Activated B cell treated with CpG ODN at 0.5 μM for 24 hours (primary cell): ENCODE measurements at regions of chr17 and their contacts with region 1.

Region 1: GRCh38 chr17:5078106-5079028 is at the start of gene ZFP3:
- DNase-seq: peak; percentile 80
- ATAC-seq: peak; percentile 88
- H3K4me3 Mint-ChIP-seq: peak within 1 kb of the TSS; percentile 83
- H3K27ac Mint-ChIP-seq: peak within 1 kb of the TSS; percentile 96
- H3K4me1 Mint-ChIP-seq: peaks cover 31% of the 10 kb centered on the region
- H3K27me3 Mint-ChIP-seq: no peaks in the 10 kb centered on the region
- CTCF ChIP-seq: no peak
- total RNA-seq, gene ZFP3: 10.1 and 11.5 TPM in 2 replicates

Region 2: DNA sequence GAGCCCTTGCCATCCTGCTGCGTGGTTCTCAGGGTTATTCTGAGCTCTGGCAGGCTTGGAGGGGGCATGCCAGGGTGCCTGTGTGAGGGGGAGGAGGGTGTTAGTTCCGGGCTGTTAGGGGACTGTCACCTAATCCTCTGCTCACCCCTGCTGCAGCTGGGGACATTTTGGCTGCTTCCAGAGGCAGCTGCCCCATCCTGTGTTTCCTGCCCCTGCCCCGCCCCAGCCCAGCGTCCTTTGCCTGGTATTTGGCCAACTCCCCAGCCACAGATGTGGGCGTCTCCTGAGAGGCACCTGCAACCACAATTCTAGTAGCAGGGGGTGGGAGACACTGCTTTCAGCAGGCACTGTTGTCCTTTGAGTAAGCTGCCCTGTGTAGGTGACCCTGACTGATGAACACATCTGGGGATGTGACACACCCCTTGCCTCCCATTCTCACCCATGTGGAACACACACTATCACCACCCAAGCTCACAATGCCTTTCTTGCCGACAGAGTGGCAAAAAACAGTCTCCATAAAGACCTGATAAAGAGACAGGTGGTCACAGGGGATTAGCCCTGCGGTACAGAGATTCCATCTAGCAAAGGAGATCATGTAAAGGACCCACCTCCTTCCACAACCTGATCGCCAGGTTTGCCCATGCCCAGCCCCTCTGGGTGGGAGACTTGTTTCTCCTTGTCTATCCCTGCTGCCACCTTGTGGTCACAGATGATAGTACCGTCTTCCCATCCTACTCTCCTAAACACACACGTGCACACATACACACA is 175.1 kb before region 1 on chr17 and contains the start of gene CHRNE:
- CTCF ChIA-PET with region 1: no interaction called
- POLR2A ChIA-PET with region 1: no interaction called
- intact Hi-C with region 1: loop called (anchors 5 kb)
- DNase-seq: peak; percentile 49
- ATAC-seq: peak; percentile 41
- H3K4me3 Mint-ChIP-seq: peak within 1 kb of the TSS; percentile 49
- H3K27ac Mint-ChIP-seq: peak within 1 kb of the TSS; percentile 73
- H3K4me1 Mint-ChIP-seq: peaks cover 44% of the 10 kb centered on the region
- H3K27me3 Mint-ChIP-seq: peaks cover 2% of the 10 kb centered on the region
- CTCF ChIP-seq: no peak
- total RNA-seq, gene CHRNE: 0.38 and 0.66 TPM in 2 replicates

Region 3: GRCh38 chr17:4997302-4998026 is 80.9 kb before region 1 on chr17 and contains the starts of genes INCA1 and KIF1C:
- CTCF ChIA-PET with region 1: interaction called, 3 read pairs
- POLR2A ChIA-PET with region 1: interaction called, 11 read pairs
- intact Hi-C with region 1: no loop called
- DNase-seq: peak; percentile 95
- ATAC-seq: peak; percentile 95
- H3K4me3 Mint-ChIP-seq: peak within 1 kb of the TSS; percentile 85
- H3K27ac Mint-ChIP-seq: peak within 1 kb of the TSS; percentile 90
- H3K4me1 Mint-ChIP-seq: peaks cover 20% of the 10 kb centered on the region
- H3K27me3 Mint-ChIP-seq: no peaks in the 10 kb centered on the region
- CTCF ChIP-seq: no peak
- total RNA-seq, gene INCA1: 0.17 and 0.44 TPM in 2 replicates
- total RNA-seq, gene KIF1C: 62.6 and 63.8 TPM in 2 replicates

Region 4: GRCh38 chr17:5097101-5097834 is 18.9 kb after region 1 on chr17:
- CTCF ChIA-PET with region 1: interaction called, 6 read pairs
- POLR2A ChIA-PET with region 1: interaction called, 18 read pairs
- intact Hi-C with region 1: loop called (anchors 1 kb)
- DNase-seq: peak; percentile 60
- ATAC-seq: peak; percentile 93
- H3K4me3 Mint-ChIP-seq: peak overlapping the region; percentile 94
- H3K27ac Mint-ChIP-seq: peak overlapping the region; percentile 91
- H3K4me1 Mint-ChIP-seq: peaks cover 12% of the 10 kb centered on the region
- H3K27me3 Mint-ChIP-seq: no peaks in the 10 kb centered on the region
- CTCF ChIP-seq: no peak

Region 5: GRCh38 chr17:5111402-5112204 is 33.2 kb after region 1 on chr17 and contains the start of gene ZNF232:
- CTCF ChIA-PET with region 1: no interaction called
- POLR2A ChIA-PET with region 1: interaction called, 16 read pairs
- intact Hi-C with region 1: loop called (anchors 1 kb)
- DNase-seq: peak; percentile 91
- ATAC-seq: peak; percentile 90
- H3K4me3 Mint-ChIP-seq: peak within 1 kb of the TSS; percentile 85
- H3K27ac Mint-ChIP-seq: peak within 1 kb of the TSS; percentile 79
- H3K4me1 Mint-ChIP-seq: peaks cover 27% of the 10 kb centered on the region
- H3K27me3 Mint-ChIP-seq: peaks cover 11% of the 10 kb centered on the region
- CTCF ChIP-seq: no peak
- total RNA-seq, gene ZNF232: 12.6 and 14.8 TPM in 2 replicates

Region 6: DNA sequence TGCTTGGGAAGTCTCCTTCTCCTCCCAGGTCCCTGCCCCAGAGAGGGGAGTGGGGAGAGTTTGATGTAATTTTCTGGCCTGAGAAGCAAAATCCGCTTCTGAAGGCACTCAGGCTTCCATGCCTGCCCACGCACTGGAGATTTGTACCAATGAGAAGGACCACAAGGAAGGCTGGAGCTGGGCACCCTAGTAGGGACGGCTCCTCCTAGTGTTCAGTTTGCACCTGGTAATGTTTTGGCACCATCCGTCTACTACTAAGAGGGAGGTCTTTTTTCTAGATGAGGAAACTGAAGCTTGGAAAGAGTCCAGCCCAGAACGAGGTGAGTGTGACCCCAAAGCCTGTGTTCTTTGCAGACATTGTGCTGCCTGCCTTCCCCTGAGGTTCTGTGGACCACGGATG is 589.5 kb after region 1 on chr17:
- CTCF ChIA-PET with region 1: no interaction called
- POLR2A ChIA-PET with region 1: no interaction called
- intact Hi-C with region 1: no loop called
- DNase-seq: no peak
- ATAC-seq: no peak
- H3K4me3 Mint-ChIP-seq: no peak overlapping the region
- H3K27ac Mint-ChIP-seq: no peak overlapping the region
- H3K4me1 Mint-ChIP-seq: peaks cover under 1% of the 10 kb centered on the region
- H3K27me3 Mint-ChIP-seq: peaks cover 26% of the 10 kb centered on the region
- CTCF ChIP-seq: no peak